Esophagus muscularis mucosa (tissue), 4 donors: ENCODE measurements at regions of chr14 and their contacts with region 1.

Region 1: DNA sequence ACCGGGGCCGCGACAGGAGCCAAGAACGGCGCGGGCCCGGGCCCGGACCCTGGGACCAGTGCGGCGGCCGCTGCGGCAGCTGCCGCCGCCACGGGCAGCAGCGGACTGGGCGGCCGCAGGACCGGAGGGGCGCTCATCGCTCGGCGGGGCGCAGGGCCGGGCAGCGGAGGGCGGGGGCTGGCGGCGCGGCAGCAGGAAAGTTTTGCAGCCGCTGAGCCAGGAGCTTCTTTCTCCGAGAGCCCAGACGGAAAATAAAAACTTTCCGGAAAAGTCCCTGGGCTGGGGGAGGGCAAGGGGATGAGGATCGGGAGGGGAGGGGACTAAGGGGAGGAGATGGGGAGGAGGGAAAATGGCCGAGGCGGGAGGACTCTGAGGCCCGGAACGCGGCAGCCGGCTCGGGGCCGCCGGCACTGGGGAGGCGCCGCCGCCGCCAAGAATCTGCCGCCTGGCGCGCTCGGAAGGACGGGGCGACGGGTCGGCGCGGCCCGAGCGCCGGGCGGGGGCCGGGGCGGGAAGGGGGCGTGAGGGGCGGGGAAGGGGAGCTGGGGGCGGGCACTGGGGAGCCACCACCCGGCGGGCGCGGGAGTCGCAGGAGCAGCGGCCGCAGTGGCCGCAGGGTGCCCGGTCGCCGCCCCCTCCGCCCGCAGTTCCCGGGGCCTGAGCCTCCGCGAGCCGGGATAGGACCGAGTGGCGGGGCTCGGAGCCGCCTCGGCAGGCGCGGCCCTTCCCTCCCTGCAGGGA is at the start of gene PRKD1:
- DNase-seq: no peak
- H3K4me3 ChIP-seq: peak within 1 kb of the TSS; percentile 73 to 93 (median 82)
- H3K27ac ChIP-seq: peak within 1 kb of the TSS; percentile 82 to 89 (median 86)
- H3K4me1 ChIP-seq: peaks cover 18 to 37% (median 27%) of the 10 kb centered on the region in 4 donors
- H3K27me3 ChIP-seq: no peaks in the 10 kb centered on the region
- CTCF ChIP-seq: peak in 2 of 3 experiments; percentile 33 to 60
- EP300 ChIP-seq: no peak
- POLR2A ChIP-seq: no peak
- total RNA-seq, gene PRKD1: 10.4 to 18.7 (median 14.0) TPM

Region 2: DNA sequence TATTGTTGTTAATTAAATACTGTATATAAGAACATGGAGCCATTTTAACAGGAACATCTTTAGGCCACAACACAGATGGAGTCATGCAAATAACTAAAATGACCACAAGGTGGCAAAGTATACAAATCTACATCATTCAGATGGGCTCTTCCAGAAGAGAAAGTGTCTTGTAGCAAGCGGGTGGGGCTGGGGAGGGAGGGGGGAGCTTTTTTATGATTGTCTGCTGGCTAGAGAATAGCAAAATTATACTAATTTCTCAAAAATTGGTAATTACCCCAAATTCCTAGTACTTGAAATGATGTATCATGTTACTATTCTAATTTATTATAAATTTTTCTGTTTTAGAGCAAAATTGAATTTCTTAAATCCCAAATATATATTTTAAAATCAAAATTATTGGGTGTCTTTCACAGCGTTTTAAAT is 378.6 kb before region 1 on chr14:
- intact Hi-C with region 1: loop called (anchors 5 kb)
- DNase-seq: no peak
- H3K4me3 ChIP-seq: no peak overlapping the region
- H3K27ac ChIP-seq: no peak overlapping the region
- H3K4me1 ChIP-seq: peaks cover 0 to 18% (median 9%) of the 10 kb centered on the region in 4 donors
- H3K27me3 ChIP-seq: no peaks in the 10 kb centered on the region
- CTCF ChIP-seq: peak; percentile 56 to 70 (median 70)
- EP300 ChIP-seq: no peak
- POLR2A ChIP-seq: no peak

Region 3: DNA sequence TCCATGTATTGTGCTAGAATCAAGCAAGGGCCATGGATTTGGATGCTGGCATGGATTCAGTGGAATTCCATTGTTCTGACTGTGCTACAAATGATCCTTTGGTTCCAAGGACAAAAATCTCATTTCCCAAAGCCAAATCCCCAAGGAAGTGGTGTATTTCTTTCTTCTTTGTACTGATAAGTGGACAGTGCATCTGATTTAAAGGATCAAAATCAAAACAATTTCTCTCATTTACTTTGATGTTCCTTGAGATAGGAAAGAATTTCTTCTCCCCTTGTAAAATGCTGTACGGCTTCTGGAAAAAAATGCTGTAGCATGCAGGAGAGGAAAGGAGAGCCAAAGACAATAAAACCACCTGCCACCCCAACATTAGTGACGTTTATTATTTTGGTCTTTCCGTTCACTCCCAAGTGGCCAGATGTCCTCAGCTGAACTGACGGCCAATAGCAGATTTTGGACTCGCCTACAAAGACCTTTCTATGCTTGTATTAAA is 185.6 kb before region 1 on chr14:
- intact Hi-C with region 1: loop called (anchors 10 kb)
- DNase-seq: no peak
- H3K4me3 ChIP-seq: no peak overlapping the region
- H3K27ac ChIP-seq: peak overlapping the region in 1 of 4 donors; percentile 31
- H3K4me1 ChIP-seq: peaks cover 16 to 55% (median 49%) of the 10 kb centered on the region in 4 donors
- H3K27me3 ChIP-seq: no peaks in the 10 kb centered on the region
- CTCF ChIP-seq: no peak
- EP300 ChIP-seq: no peak
- POLR2A ChIP-seq: no peak

Region 4: GRCh38 chr14:29810682-29811081 is 116.9 kb before region 1 on chr14:
- intact Hi-C with region 1: loop called (anchors 10 kb)
- DNase-seq: no peak
- H3K4me3 ChIP-seq: no peak overlapping the region
- H3K27ac ChIP-seq: no peak overlapping the region
- H3K4me1 ChIP-seq: peaks cover 6 to 38% (median 29%) of the 10 kb centered on the region in 4 donors
- H3K27me3 ChIP-seq: no peaks in the 10 kb centered on the region
- CTCF ChIP-seq: no peak
- EP300 ChIP-seq: no peak
- POLR2A ChIP-seq: no peak

Region 5: DNA sequence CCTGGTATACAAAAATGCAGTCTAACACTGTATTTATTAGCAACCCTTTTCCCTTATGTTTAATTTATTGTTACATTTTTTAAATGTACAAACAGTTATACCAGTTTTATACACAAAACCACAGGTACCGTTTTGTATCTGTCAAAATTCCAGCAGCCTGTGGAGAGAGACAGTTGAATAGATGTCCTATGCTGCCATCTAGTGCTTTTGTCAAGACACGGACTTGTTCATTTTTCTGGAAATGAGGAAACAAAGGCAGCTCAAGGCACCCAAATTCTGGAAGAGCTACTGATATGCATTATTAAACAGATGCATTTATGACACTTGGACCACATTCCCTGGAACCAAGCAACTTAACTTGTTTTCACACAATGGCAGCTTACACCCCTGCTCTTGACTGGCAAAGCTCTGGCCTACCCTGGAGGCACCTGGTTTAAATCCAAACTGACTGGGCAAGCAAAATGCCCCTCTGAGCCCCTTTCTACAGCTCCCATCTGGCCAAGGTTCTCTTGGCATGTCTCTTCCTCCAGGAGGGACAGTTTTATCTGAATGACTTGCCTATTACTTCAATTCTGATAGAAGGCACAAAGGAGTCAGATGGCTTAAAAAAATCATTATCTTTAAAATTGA is 287.0 kb after region 1 on chr14:
- intact Hi-C with region 1: loop called (anchors 5 kb)
- DNase-seq: no peak
- H3K4me3 ChIP-seq: no peak overlapping the region
- H3K27ac ChIP-seq: no peak overlapping the region
- H3K4me1 ChIP-seq: peaks cover 0 to 17% (median 14%) of the 10 kb centered on the region in 4 donors
- H3K27me3 ChIP-seq: no peaks in the 10 kb centered on the region
- CTCF ChIP-seq: peak; percentile 63 to 67 (median 64)
- EP300 ChIP-seq: no peak
- POLR2A ChIP-seq: no peak